CD8-positive, alpha-beta T cell (primary cell): ENCODE measurements at regions of chr10 and their contacts with region 1.

Region 1: DNA sequence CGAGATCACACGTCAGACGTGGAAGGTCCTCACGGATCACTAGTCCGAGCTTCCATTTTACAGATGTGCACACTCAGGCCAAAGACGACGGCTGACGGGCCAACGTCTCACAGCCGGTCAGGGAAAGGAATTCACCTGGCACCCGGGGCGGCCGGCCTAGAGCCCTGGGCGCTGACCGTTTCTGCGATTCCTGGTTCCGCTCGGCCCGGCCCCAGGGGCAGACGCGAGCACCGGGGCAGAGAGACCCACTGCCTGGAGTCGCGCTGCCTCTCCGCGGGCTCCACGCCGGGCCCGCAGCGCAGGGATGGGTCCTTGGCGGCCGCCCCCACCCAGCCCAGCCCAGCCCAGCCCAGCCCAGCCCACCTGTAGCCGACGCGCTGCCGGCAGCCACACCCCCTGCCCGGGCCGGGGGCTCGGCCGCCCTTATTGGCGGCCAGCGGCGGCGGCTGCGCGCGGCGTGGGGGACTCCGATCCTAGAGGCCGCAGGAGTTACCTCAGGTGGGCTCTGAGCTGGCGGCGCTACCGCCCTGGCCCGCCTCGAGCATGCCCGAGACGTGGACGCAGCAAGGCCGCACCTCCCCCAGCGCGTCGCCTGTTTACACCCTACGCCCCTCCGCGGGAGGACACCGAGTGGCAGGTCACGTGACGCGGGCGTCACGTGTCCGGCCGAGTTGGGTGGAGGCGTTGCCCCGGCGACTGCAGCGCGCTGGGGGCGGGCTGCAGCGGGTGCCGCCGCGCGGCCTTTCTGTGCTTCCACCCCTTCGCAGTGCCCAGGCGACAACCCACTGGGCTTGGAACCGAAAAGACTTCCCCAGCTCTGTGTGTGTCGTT is 78.1 kb downstream of the ZFAND4 start:
- DNase-seq: peak; percentile 79 to 95 (median 88)
- ATAC-seq: peak; percentile 86
- H3K4me3 ChIP-seq: peak overlapping the region; percentile 77 to 85
- H3K4me3 Mint-ChIP-seq: peak overlapping the region; percentile 89
- H3K27ac ChIP-seq: peak overlapping the region; percentile 62 to 63
- H3K27ac Mint-ChIP-seq: peak overlapping the region; percentile 95
- H3K4me1 ChIP-seq: peaks cover 23% of the 10 kb centered on the region
- H3K4me1 Mint-ChIP-seq: peaks cover 42% of the 10 kb centered on the region
- H3K27me3 ChIP-seq: no peaks in the 10 kb centered on the region
- H3K27me3 Mint-ChIP-seq: peaks cover 6% of the 10 kb centered on the region
- CTCF ChIP-seq: no peak

Region 2: DNA sequence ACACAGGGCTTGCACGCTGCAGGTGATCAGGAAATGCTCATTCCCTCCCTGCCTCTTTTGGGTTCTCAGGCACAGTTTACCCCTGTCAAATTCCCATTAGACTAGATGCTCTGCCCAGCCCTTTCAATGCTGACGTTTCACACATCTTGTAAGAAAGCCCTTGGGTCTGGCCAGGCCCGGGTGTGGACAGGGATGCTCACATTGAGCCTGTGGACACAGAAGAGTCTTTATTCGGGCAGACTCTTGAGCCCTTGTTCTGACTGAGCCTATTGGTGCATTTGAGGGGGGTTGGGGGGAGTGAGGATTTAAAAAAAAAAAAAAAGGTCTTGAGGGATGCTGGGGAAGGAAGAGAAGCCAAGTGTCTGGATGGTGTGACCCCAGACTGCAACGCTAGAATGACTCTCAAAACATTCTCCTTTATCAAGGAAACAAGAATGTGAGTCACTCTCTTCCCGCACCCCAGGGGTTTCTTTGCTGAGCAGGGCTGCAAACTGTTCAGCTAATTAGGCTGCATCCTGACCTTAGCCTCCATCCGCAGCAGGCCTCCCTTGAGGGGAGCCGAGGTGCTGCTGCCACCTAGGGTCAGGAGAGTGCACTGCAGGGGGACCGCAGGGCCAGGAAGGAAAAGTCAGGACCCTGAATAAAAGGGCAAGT is 737.0 kb before region 1 on chr10:
- CTCF ChIA-PET with region 1: no interaction called
- POLR2A ChIA-PET with region 1: no interaction called
- intact Hi-C with region 1: no loop called
- DNase-seq: peak in 8 of 9 experiments; percentile 33 to 69 (median 58)
- ATAC-seq: peak; percentile 84
- H3K4me3 ChIP-seq: no peak overlapping the region
- H3K4me3 Mint-ChIP-seq: no peak overlapping the region
- H3K27ac ChIP-seq: no peak overlapping the region
- H3K27ac Mint-ChIP-seq: no peak overlapping the region
- H3K4me1 ChIP-seq: no peaks in the 10 kb centered on the region
- H3K4me1 Mint-ChIP-seq: no peaks in the 10 kb centered on the region
- H3K27me3 ChIP-seq: no peaks in the 10 kb centered on the region
- H3K27me3 Mint-ChIP-seq: peaks cover 4% of the 10 kb centered on the region
- CTCF ChIP-seq: peak; percentile 93

Region 3: DNA sequence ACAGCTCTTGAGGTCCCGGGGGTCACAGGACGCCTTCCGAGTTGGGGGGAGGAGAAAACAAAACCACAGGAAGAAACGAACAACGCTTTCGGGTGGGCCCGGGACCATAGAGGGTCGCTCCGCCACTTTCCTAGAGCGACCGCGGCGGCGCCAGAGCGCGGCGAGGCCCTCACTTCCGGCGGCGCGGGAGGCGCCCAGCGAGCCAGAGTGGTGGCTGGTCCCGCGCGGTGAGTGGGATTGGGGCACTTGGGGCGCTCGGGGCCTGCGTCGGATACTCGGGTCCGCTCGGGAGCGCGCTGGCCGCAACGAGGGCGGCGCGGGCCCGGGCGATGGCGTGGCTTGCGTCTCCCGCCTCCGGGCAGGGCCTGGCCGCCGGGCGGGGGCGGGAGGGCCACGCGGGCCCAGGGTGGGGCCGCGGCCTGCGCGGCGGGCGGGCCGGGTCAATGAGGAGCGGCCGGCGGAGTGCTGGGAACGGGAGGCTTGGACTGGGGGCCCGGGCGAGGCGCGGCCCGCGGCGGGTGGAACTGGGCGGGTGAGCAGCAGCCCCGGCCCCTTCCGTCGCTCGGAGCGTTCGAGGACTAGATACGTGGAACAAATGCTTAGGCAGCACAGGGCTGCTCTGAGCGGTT is 593.6 kb before region 1 on chr10 and contains the start of gene ZNF22:
- CTCF ChIA-PET with region 1: no interaction called
- POLR2A ChIA-PET with region 1: no interaction called
- intact Hi-C with region 1: loop called in 1 of 2 experiments (anchors 5 kb)
- DNase-seq: peak; percentile 50 to 89 (median 76)
- ATAC-seq: peak; percentile 79
- H3K4me3 ChIP-seq: peak within 1 kb of the TSS; percentile 60 to 65
- H3K4me3 Mint-ChIP-seq: peak within 1 kb of the TSS; percentile 89
- H3K27ac ChIP-seq: peak within 1 kb of the TSS; percentile 65 to 78
- H3K27ac Mint-ChIP-seq: peak within 1 kb of the TSS; percentile 98
- H3K4me1 ChIP-seq: peaks cover 32% of the 10 kb centered on the region
- H3K4me1 Mint-ChIP-seq: peaks cover 45% of the 10 kb centered on the region
- H3K27me3 ChIP-seq: no peaks in the 10 kb centered on the region
- H3K27me3 Mint-ChIP-seq: no peaks in the 10 kb centered on the region
- CTCF ChIP-seq: no peak
- total RNA-seq, gene ZNF22: 26.5 to 29.6 TPM

Region 4: DNA sequence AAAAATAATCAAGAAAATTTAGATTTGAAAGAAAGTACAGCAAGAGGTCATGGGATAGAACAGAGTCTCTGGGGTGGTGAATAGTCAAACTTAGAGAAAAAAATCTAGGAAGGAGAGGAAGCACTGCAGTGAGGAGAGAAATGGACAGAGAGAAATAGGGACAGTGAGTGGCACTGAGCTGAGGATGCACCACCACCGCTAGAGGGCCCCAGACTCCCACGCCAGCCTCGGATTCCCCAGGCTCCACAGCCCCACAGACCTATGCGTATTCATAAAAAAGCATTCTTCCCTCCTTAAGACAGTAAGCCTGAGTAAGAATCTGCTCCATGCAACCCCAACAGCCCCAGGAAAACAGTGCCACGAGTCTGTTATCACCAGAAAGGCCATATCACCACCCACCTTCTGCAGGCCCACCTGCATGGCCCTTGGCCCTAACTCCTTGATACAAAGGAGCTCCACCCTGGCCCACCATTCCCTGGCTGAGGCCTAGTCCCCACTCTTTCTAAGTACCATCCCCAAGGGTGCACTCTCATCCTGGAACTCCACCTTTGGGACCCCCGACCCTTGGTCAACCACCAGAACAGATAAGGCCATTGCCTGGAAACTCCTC is 129.4 kb before region 1 on chr10:
- CTCF ChIA-PET with region 1: interaction called, 4 read pairs
- POLR2A ChIA-PET with region 1: no interaction called
- intact Hi-C with region 1: loop called (anchors 5 kb)
- DNase-seq: peak; percentile 60 to 85 (median 78)
- ATAC-seq: peak; percentile 96
- H3K4me3 ChIP-seq: no peak overlapping the region
- H3K4me3 Mint-ChIP-seq: no peak overlapping the region
- H3K27ac ChIP-seq: no peak overlapping the region
- H3K27ac Mint-ChIP-seq: no peak overlapping the region
- H3K4me1 ChIP-seq: peaks cover 12% of the 10 kb centered on the region
- H3K4me1 Mint-ChIP-seq: peaks cover 25% of the 10 kb centered on the region
- H3K27me3 ChIP-seq: no peaks in the 10 kb centered on the region
- H3K27me3 Mint-ChIP-seq: no peaks in the 10 kb centered on the region
- CTCF ChIP-seq: peak; percentile 93

Region 5: GRCh38 chr10:45580371-45581215 is 13.9 kb before region 1 on chr10:
- CTCF ChIA-PET with region 1: interaction called, 5 read pairs
- POLR2A ChIA-PET with region 1: interaction called, 11 read pairs
- intact Hi-C with region 1: loop called (anchors 1 kb)
- DNase-seq: peak in 4 of 9 experiments; percentile 21 to 73 (median 42)
- ATAC-seq: peak; percentile 66
- H3K4me3 ChIP-seq: peak overlapping the region; percentile 38 to 58
- H3K4me3 Mint-ChIP-seq: peak overlapping the region; percentile 88
- H3K27ac ChIP-seq: peak overlapping the region; percentile 50 to 91
- H3K27ac Mint-ChIP-seq: peak overlapping the region; percentile 96
- H3K4me1 ChIP-seq: peaks cover 27% of the 10 kb centered on the region
- H3K4me1 Mint-ChIP-seq: peaks cover 41% of the 10 kb centered on the region
- H3K27me3 ChIP-seq: no peaks in the 10 kb centered on the region
- H3K27me3 Mint-ChIP-seq: no peaks in the 10 kb centered on the region
- CTCF ChIP-seq: no peak

Region 6: DNA sequence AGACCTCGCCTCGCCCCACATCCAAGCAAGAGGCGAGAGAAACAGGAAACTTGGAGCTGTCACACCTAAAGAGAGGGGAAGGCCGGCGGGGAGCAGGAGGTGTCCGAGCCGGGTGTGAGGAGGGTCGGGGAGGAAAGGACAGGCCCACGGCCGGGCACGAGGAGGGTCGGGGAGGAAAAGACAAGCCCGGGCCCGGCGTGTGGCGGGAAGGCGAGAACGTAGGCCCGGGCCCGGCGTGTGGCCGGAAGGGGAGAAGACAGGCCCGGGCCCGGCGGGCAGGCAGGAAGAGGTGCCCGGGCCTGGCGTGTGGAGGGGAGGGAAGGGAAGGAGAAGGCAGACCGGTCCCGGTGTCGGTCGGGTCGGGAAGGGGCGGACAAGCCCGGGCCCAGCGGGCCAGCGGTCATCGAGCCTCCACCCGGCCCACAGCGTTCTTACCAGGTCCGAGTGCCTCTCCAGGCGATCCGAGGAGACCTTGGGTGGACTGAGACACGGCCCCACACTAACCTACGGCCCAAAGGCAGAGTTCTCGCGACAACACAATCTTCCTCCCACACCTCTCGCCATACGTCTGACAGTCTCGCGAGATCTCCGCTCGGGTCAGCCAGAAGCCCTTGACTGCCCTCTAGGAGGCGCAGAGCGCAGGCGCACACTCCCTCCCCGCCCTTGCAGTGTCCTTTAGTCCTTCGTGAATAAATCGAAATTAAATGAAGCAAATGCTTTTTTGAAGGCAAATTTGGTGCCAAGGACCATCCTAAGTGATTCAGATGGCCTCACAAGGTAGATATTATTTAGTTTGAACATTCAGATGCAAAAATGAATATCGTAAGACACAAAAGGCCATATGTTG is 435.8 kb after region 1 on chr10 and contains the start of gene NCOA4:
- CTCF ChIA-PET with region 1: no interaction called
- POLR2A ChIA-PET with region 1: no interaction called
- intact Hi-C with region 1: loop called in 1 of 2 experiments (anchors 1 kb)
- DNase-seq: peak; percentile 87 to 99 (median 96)
- ATAC-seq: peak; percentile 97
- H3K4me3 ChIP-seq: peak within 1 kb of the TSS; percentile 86 to 97
- H3K4me3 Mint-ChIP-seq: peak within 1 kb of the TSS; percentile 99
- H3K27ac ChIP-seq: peak within 1 kb of the TSS; percentile 84 to 98
- H3K27ac Mint-ChIP-seq: peak within 1 kb of the TSS; percentile 95
- H3K4me1 ChIP-seq: peaks cover 48% of the 10 kb centered on the region
- H3K4me1 Mint-ChIP-seq: peaks cover 49% of the 10 kb centered on the region
- H3K27me3 ChIP-seq: no peaks in the 10 kb centered on the region
- H3K27me3 Mint-ChIP-seq: no peaks in the 10 kb centered on the region
- CTCF ChIP-seq: peak; percentile 69
- total RNA-seq, gene NCOA4: 47.4 to 51.5 TPM